ENCODE measurements at regions of chr20 and their contacts with region 1.

Region 1: GRCh38 chr20:34876162-34877001 is at the start of gene ACSS2:
- DNase-seq: peak in 1 of 2 experiments; percentile 100
- H3K4me3 ChIP-seq: peak within 1 kb of the TSS; percentile 91
- H3K27ac ChIP-seq: peak within 1 kb of the TSS; percentile 83
- H3K4me1 ChIP-seq: peaks cover 40% of the 10 kb centered on the region
- H3K27me3 ChIP-seq: no peaks in the 10 kb centered on the region
- CTCF ChIP-seq: no peak
- total RNA-seq, gene ACSS2: 81.1 and 108 TPM in 2 replicates

Region 2: DNA sequence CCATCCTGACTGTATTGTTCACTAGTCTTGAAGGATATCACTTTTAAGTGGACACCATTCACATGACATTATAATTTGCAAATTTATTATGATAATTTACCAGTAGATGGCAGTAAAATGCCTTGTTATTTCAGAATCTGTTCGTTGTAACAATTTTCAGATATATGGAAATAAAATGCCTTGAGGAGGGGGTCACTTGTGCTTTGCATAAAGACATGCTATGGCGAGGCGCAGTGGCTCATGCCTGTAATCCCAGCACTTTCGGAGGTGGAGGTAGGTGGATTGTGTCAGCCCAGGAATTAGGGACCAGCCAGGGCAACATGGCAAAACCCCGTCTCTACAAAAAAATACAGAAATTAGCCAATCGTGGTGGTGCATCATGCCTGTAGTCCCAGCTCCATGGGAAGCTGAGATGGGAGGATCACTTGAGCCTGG is 41.9 kb before region 1 on chr20:
- CTCF ChIA-PET with region 1: no interaction called
- POLR2A ChIA-PET with region 1: no interaction called
- intact Hi-C with region 1: loop called (anchors 5 kb)
- DNase-seq: peak; percentile 10 to 52
- H3K4me3 ChIP-seq: no peak overlapping the region
- H3K27ac ChIP-seq: no peak overlapping the region
- H3K4me1 ChIP-seq: no peaks in the 10 kb centered on the region
- H3K27me3 ChIP-seq: no peaks in the 10 kb centered on the region
- CTCF ChIP-seq: peak; percentile 72

Region 3: DNA sequence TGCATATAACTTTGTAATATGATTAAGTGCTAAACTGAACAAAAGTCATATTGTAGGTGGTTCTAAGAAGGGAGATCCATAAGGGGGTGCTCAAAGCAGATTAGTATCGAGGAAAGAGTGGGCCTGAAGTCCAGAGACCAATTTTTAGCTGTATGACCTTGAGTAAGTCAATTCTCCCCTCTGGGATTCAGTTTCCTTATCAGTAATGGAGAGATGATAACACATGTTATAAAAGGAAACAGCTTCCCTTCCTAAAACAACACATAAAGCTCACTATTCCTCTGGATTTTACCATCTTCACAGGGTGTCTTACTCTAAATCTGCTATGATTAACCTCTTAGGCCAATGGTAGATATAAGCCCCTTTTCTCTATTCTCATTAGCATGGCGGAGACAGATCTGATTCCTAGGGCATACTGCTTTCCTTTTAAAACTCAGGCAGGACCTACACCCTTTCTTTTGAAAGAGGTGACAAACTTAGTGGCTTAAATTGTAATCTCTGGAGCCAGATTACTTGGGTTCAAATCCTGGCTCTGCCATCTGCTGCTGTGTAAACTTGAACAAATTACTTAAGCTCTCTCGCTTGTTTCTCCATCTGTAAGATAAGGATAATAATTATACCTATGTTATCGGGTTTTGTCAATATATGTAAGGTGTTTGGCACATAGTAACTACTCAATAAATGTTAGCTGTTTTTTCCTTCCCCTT is 39.5 kb after region 1 on chr20:
- CTCF ChIA-PET with region 1: interaction called, 13 read pairs
- POLR2A ChIA-PET with region 1: interaction called, 4 read pairs
- intact Hi-C with region 1: no loop called
- DNase-seq: no peak
- H3K4me3 ChIP-seq: no peak overlapping the region
- H3K27ac ChIP-seq: 0 out of 2 replicates have a peak overlapping the region, but pooled peaks have one; percentile 20
- H3K4me1 ChIP-seq: peaks cover 37% of the 10 kb centered on the region
- H3K27me3 ChIP-seq: no peaks in the 10 kb centered on the region
- CTCF ChIP-seq: no peak

Region 4: DNA sequence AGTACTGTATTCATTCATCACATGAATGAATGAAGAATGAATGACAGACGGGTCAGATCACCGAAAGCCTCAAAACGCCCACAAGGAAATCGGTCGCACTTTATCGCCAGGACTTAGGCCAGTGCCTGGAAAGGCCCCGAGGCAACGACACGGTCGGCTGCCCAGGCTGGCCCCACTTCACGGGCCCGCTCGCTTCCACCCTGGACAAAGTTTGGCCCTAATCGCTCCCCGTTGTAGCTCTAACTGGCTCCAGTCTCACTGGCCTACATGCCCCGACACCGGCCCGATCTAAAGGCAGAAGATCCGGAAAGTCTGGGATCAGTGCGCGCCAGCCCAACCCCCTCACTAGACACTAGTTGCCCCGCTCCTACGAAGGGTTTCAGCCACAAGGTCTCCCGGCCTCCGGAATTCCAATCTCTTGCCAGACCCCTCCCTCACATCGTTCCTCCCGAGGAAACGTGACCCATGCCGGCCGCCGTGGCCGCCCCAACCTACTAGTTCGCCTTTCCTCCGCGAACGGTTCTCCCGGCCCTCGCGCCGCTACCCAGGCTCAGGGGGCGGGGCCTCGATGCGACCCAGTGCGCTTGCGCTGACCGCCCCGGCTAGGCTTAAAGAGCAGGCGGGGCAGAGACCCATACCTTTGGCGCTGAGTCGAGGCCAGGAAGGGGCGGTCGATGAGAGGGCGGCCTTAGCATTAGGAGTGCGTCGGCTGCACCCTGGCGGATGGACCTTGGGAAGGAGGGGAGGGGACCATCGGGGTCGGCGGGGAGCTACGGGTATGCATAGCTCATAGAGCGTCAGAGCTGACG is 79.1 kb after region 1 on chr20 and contains the starts of genes GSS and MYH7B:
- CTCF ChIA-PET with region 1: interaction called, 20 read pairs
- POLR2A ChIA-PET with region 1: interaction called, 10 read pairs
- intact Hi-C with region 1: loop called (anchors 1 kb)
- DNase-seq: peak; percentile 89 to 99
- H3K4me3 ChIP-seq: peak within 1 kb of the TSS; percentile 69
- H3K27ac ChIP-seq: peak within 1 kb of the TSS; percentile 87
- H3K4me1 ChIP-seq: peaks cover 40% of the 10 kb centered on the region
- H3K27me3 ChIP-seq: no peaks in the 10 kb centered on the region
- CTCF ChIP-seq: peak; percentile 61
- total RNA-seq, gene GSS: 131 and 138 TPM in 2 replicates
- total RNA-seq, gene MYH7B: 1.0 and 2.3 TPM in 2 replicates

Region 5: DNA sequence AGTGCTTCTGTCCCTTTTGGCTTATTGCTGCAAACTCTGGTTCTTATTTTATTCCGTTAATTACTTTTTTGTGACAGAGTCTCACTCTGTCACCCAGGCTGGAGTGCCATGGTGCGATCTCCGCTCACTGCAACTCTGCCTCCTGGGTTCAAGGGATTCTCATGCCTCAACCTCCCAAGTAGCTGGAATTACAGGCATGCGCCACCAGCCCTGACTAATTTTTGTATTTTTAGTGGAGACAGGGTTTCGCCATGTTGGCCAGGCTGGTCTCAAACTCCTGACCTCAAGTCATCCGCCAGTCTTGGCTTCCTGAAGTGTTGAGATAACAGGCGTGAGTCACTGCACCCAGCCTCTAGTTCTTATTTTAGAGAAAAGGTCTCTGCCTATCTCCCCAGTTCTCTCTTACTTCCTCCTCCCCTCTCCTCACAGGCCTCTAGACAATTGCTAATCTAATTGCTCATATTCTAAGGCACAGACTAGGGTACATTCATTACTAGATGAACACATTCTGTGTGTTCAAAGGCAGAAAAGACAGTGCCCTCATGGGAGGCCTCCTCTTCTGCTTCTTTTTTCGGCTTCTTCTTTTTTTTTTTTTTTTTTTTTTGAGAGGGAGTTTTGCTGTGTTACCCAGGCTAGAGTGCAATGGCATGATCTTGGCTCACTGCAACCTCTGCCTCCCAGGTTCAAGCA is 243.8 kb after region 1 on chr20:
- CTCF ChIA-PET with region 1: interaction called, 18 read pairs
- POLR2A ChIA-PET with region 1: no interaction called
- intact Hi-C with region 1: no loop called
- DNase-seq: peak in 1 of 2 experiments; percentile 66
- H3K4me3 ChIP-seq: no peak overlapping the region
- H3K27ac ChIP-seq: no peak overlapping the region
- H3K4me1 ChIP-seq: 0 out of 2 replicates have a peak, but pooled peaks cover 8% of the 10 kb centered on the region
- H3K27me3 ChIP-seq: no peaks in the 10 kb centered on the region
- CTCF ChIP-seq: no peak

Region 6: DNA sequence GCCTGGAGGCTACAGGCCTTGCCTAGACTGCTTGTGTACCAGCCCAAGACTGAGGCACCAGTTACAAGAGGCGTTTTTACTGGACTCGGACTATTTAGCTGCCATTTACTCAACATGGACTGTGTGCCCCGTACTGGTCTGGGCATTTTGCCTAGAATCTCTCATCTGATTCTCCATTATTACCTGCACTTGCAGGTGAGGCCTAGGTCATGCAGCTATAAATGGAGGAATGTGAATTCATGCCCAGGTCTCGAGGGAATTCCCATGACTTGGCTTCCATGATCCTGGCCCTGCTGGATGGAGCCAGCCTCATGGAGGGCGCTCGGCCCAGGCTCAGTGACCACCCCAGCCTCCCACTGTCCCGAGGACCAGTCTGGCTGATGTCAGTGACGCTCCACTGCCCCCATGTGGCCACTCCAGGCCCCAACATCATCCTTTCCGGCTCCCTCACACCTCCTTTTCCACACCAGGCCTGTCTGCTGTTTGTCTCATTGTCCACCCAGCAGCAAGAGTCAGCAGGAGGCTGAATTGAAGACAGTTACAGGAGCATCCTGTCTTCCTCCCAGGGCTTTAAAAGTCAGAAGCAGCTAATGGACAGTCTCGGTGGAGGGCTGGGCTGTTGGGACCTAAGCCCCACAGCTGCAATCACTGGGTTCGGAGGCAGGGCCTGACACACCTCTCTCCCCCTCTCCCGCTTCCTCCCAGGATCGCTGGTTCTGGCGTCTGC is 392.8 kb after region 1 on chr20:
- CTCF ChIA-PET with region 1: no interaction called
- POLR2A ChIA-PET with region 1: interaction called, 5 read pairs
- intact Hi-C with region 1: loop called (anchors 2 kb)
- DNase-seq: peak in 1 of 2 experiments; percentile 66
- H3K4me3 ChIP-seq: no peak overlapping the region
- H3K27ac ChIP-seq: no peak overlapping the region
- H3K4me1 ChIP-seq: peaks cover under 1% of the 10 kb centered on the region
- H3K27me3 ChIP-seq: no peaks in the 10 kb centered on the region
- CTCF ChIP-seq: peak; percentile 84